Activated CD4-positive, alpha-beta memory T cell treated with anti-CD3 and anti-CD28 coated beads, Interleukin-2, amount 10 ng/mL, durations not matched to agents 7 days and 5 days (primary cell): ENCODE measurements at regions of chr22 and their contacts with region 1.

Region 1: GRCh38 chr22:43993027-43993760 is 30.9 kb upstream of the PARVB start:
- DNase-seq: peak; percentile 62
- H3K4me3 Mint-ChIP-seq: no peak overlapping the region
- H3K27ac Mint-ChIP-seq: no peak overlapping the region
- H3K4me1 Mint-ChIP-seq: peaks cover 26% of the 10 kb centered on the region
- H3K27me3 Mint-ChIP-seq: no peaks in the 10 kb centered on the region

Region 2: DNA sequence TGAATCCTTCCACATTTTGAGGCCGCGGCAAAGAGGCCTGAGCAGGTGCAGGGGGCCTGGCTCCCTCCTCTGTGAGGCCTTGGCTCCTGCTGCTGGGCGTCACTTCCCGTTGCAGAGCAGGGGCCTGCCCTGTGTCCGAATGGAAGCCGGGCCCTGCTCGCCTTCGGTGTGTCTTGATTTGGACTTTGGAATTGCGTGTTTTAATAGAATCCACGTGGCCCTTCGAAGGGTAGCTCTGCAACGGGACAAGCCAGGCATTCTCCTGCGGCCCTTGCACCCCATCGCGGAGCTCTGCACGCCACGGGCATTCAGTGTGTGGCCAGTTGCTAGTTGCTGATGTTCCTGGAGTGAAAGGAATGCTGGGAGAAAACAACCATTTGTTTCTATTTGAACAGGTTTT is 12.2 kb before region 1 on chr22:
- CTCF ChIA-PET with region 1: interaction called, 14 read pairs
- POLR2A ChIA-PET with region 1: no interaction called
- DNase-seq: no peak
- H3K4me3 Mint-ChIP-seq: no peak overlapping the region
- H3K27ac Mint-ChIP-seq: no peak overlapping the region
- H3K4me1 Mint-ChIP-seq: no peaks in the 10 kb centered on the region
- H3K27me3 Mint-ChIP-seq: no peaks in the 10 kb centered on the region

Region 3: DNA sequence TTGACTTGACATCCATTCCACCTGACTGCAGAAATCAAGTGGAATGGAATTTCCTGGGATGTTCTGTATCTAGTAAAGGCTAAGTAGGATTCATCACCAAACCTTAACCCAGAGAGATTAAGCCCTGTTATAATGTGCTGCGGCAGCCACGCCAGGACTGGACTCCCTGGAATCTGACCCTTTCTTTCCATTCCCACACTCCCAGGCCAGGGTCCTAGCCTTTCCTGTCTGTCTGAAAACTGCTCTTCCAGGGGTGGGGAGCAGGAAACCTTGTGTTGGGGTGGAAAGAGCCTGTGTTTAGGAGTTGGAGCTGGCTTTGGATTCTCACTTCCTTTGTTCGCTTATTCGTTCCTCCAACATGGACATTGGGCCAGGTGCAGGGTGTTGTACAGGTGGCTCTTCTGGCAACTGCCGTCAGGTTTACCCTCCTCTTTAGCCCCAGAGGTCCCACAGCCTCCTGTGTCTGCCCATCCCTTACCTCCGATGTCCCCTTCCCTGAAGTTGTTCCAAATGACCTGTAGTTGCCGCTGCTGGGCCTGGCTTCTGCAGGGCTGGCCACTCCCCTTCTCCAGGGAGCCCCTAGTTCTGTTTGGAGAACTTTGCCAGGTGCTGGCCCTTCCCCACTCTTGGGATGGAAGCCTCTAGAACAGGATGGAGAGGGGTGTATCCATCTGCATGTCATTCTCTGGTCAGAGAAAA is 10.4 kb after region 1 on chr22:
- CTCF ChIA-PET with region 1: interaction called, 12 read pairs
- POLR2A ChIA-PET with region 1: no interaction called
- DNase-seq: no peak
- H3K4me3 Mint-ChIP-seq: no peak overlapping the region
- H3K27ac Mint-ChIP-seq: no peak overlapping the region
- H3K4me1 Mint-ChIP-seq: no peaks in the 10 kb centered on the region
- H3K27me3 Mint-ChIP-seq: no peaks in the 10 kb centered on the region

Region 4: DNA sequence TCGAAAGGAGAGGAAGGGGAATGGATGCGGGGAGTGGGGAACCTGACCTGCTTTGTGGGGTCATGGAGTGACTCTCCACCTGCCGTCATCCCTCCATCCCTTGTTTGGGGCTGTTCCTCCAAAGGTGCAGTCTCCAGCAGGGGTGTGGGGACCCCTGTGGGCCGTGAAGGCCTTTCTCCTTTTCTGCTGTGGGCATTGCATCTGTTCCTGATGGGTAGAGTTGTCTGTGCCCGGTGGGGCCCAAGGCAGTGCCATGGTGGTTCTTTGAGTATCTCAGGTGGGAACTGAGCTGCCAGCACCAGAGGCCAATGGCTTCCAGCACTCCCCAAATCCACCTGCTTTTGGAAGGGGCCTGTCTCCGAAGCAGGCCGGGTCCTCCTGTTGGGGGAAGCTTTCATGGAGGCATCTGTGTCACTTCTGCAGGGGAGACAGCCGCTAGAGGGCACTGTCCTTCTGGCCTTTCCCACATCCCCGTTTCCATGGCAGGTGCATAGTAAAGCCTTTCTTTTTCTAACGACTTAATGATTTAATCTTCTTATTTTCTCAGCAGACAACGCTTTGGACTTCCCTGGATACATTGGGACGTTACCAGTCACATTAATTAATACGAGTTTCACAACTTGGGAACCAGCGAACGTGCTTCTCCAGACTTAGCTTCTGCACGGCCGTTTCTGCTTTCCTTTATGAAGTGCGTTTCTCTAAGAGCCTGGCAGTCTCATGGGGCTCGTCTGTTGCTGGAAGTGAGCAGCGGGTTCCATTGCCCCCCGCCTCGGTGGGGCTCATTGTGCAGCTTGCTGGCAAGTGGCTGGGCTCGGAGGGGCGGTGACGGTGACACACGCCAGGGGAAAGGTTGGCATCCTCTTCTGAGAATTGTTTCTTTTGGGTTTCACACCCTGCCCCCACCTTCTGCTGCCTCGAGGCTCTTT is 88.0 kb after region 1 on chr22:
- CTCF ChIA-PET with region 1: interaction called, 116 read pairs
- POLR2A ChIA-PET with region 1: interaction called, 6 read pairs
- DNase-seq: peak; percentile 73
- H3K4me3 Mint-ChIP-seq: no peak overlapping the region
- H3K27ac Mint-ChIP-seq: no peak overlapping the region
- H3K4me1 Mint-ChIP-seq: no peaks in the 10 kb centered on the region
- H3K27me3 Mint-ChIP-seq: no peaks in the 10 kb centered on the region

Region 5: DNA sequence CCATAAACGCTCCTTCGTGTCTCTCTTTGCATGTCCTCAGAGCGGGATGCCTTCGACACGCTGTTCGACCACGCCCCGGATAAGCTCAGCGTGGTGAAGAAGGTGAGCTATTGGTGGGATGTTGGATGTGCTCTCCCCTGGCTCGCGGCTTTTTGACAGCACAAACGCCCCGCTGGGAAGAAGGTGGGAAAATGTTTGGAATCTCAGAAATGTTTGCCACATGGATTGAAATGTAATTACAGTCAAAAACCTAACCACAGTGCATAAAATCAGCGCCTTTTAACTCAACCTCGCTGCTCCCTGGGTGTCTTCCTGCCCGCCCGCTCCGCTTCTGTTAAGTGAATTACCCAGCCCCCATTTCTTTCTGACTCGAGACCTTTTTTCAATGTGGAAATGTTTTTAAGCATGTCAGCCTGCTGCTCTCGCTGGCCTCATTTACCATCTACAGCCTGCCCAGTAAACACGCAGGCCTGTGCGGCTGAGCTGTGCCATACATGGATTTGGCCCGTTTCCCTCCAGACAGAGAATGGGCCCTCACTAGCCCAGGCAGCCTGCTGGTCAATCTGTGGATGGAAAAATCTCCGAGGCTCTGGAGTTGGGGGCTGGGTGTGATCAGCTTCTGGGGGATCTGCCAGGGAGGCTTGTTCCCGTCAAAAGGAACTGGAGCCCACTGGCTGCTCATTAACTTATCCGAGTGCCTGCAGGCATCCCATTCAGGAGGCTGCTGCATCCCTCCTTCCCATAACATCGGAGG is 154.8 kb after region 1 on chr22:
- CTCF ChIA-PET with region 1: no interaction called
- POLR2A ChIA-PET with region 1: no interaction called
- DNase-seq: no peak
- H3K4me3 Mint-ChIP-seq: no peak overlapping the region
- H3K27ac Mint-ChIP-seq: no peak overlapping the region
- H3K4me1 Mint-ChIP-seq: no peaks in the 10 kb centered on the region
- H3K27me3 Mint-ChIP-seq: no peaks in the 10 kb centered on the region

Region 6: DNA sequence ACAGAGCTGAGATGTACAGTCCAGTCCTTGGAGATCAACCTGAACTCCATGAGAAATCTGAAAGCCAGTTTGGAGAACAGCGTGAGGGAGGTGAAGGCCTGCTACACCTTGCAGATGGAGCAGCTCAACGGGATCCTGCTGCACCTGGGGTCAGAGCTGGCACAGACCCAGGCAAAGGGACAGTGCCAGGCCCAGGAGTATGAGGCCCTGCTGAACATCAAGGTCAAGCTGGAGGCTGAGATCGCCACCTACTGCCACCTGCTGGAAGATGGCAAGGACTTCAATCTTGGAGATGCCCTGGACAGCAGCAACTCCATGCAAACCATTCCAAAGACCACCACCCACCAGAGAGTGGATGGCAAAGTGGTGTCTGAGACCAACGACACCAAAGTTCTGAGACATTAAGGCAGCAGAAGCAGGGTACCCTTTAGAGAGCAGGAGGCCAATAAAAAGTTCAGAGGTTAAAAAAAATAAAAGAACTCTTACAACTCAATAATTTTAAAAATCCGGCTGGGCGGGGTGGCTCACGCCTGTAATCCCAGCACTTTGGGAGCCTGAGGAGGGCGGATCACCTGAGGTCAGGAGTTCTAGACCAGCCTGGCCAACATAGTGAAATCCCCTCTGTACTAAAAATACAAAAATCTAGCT is 574.8 kb after region 1 on chr22:
- CTCF ChIA-PET with region 1: interaction called, 15 read pairs
- POLR2A ChIA-PET with region 1: no interaction called
- DNase-seq: peak; percentile 57
- H3K4me3 Mint-ChIP-seq: no peak overlapping the region
- H3K27ac Mint-ChIP-seq: no peak overlapping the region
- H3K4me1 Mint-ChIP-seq: no peaks in the 10 kb centered on the region
- H3K27me3 Mint-ChIP-seq: peaks cover 9% of the 10 kb centered on the region

Region 7: GRCh38 chr22:44625981-44626687 is 632.9 kb after region 1 on chr22:
- CTCF ChIA-PET with region 1: interaction called, 20 read pairs
- POLR2A ChIA-PET with region 1: interaction called, 3 read pairs
- DNase-seq: peak; percentile 83
- H3K4me3 Mint-ChIP-seq: no peak overlapping the region
- H3K27ac Mint-ChIP-seq: no peak overlapping the region
- H3K4me1 Mint-ChIP-seq: peaks cover 5% of the 10 kb centered on the region
- H3K27me3 Mint-ChIP-seq: peaks cover 2% of the 10 kb centered on the region